PC-9 (cell line): ENCODE measurements at regions of chr15 and their contacts with region 1.

Region 1: GRCh38 chr15:38699633-38700230 is 135.1 kb upstream of the RASGRP1 start:
- DNase-seq: peak in 1 of 2 experiments; percentile 54
- H3K4me3 ChIP-seq: no peak overlapping the region
- H3K27ac ChIP-seq: no peak overlapping the region
- H3K4me1 ChIP-seq: peaks cover 16% of the 10 kb centered on the region
- H3K27me3 ChIP-seq: no peaks in the 10 kb centered on the region
- CTCF ChIP-seq: peak; percentile 85

Region 2: DNA sequence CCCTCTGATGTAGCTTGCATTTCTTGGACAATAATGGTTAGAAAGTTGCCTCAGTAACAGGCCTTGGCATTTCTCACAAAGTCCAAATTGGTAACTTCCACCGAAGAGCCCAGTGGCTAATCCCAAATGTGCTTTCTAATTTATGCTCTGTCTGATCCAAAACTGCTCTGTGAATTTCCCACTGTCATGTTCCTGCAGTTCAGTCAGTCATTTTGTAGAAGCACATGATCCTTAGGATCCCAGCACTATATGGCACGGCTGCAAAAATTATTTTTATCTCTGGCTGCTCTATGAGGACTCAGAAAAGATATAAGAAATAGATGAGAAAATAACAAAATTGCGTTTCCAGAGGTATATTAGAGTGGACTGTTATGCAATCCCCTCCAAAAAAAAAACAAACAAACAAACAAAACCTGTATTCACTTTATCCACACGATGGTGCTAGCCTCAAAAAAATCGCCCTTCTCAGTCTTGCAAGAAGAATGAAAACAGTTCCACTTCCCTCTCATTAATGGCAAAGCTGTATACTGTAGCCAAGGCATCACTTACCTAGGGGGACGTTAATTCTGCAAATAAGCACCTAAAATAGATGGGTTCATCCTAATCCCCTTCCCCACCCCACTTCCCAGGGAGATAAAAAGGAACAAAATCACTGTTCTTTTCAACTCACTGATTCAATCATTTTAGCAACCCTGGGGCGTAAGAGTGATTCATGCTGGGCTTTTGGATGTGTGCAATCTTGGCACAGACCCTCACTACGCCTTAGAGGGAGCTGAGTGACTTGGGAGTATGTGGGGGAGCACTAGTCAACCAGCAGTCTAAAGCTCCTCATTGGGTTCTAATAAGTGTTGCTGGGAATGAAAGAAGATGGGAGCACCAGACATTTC is 704.0 kb before region 1 on chr15:
- CTCF ChIA-PET with region 1: no interaction called
- POLR2A ChIA-PET with region 1: no interaction called
- intact Hi-C with region 1: loop called (anchors 5 kb)
- DNase-seq: peak in 1 of 2 experiments; percentile 28
- H3K4me3 ChIP-seq: no peak overlapping the region
- H3K27ac ChIP-seq: no peak overlapping the region
- H3K4me1 ChIP-seq: no peaks in the 10 kb centered on the region
- H3K27me3 ChIP-seq: no peaks in the 10 kb centered on the region
- CTCF ChIP-seq: peak; percentile 74

Region 3: GRCh38 chr15:38440353-38441129 is 259.2 kb before region 1 on chr15:
- CTCF ChIA-PET with region 1: interaction called, 21 read pairs
- POLR2A ChIA-PET with region 1: no interaction called
- intact Hi-C with region 1: no loop called
- DNase-seq: peak; percentile 61 to 66
- H3K4me3 ChIP-seq: peak overlapping the region; percentile 35; the same call in 1 of the 2 replicates
- H3K27ac ChIP-seq: no peak overlapping the region
- H3K4me1 ChIP-seq: peaks cover 7% of the 10 kb centered on the region; the same call in 1 of the 2 replicates
- H3K27me3 ChIP-seq: no peaks in the 10 kb centered on the region
- CTCF ChIP-seq: peak; percentile 91

Region 4: GRCh38 chr15:38563723-38564519 is 135.8 kb before region 1 on chr15:
- CTCF ChIA-PET with region 1: interaction called, 10 read pairs
- POLR2A ChIA-PET with region 1: no interaction called
- intact Hi-C with region 1: loop called (anchors 5 kb)
- DNase-seq: peak in 1 of 2 experiments; percentile 67
- H3K4me3 ChIP-seq: peak overlapping the region; percentile 62; the same call in 1 of the 2 replicates
- H3K27ac ChIP-seq: no peak overlapping the region
- H3K4me1 ChIP-seq: no peaks in the 10 kb centered on the region
- H3K27me3 ChIP-seq: no peaks in the 10 kb centered on the region
- CTCF ChIP-seq: peak; percentile 89

Region 5: DNA sequence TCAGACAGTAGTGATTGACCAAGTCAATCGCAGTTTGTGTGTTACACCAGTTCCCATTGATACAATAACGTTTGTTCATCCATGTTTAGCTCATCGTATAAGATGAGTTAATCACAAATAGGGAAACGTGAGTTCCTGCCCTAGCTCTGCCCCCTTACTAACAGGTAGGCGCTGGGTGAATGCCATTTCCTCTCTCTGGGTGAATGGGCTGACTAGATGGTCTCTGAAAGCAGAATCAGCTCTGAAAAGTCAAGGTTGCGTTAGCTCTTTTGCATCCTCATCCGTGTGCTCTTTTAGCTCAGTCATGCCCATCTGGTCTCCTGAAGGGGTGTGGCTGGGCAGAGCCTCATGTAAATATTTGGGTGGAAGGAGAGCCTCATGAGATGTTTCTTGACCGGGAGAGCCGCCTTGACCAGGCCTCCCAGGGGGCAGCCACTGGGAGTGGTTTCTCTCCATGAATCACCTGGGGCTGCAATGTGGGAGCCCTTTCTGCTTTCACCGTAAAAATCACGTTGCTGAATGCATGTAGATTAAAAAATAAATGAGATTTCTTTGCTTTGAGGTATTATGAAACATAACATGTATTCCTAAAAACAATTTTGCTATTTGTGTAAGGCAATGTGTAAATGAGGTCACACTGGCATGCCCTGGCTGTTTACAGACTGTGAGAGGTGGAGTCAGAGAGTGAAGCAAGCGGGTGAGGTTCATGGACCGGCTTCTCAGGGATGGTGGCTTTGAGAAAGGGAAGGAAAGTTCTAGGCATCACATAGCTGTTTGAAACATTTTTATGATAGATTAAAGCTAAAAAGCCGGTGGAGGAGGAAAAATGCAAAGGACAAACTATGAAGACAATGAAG is 26.7 kb before region 1 on chr15:
- CTCF ChIA-PET with region 1: interaction called, 12 read pairs
- POLR2A ChIA-PET with region 1: no interaction called
- intact Hi-C with region 1: no loop called
- DNase-seq: peak in 1 of 2 experiments; percentile 5
- H3K4me3 ChIP-seq: no peak overlapping the region
- H3K27ac ChIP-seq: no peak overlapping the region
- H3K4me1 ChIP-seq: no peaks in the 10 kb centered on the region
- H3K27me3 ChIP-seq: no peaks in the 10 kb centered on the region
- CTCF ChIP-seq: no peak

Region 6: GRCh38 chr15:39782441-39783138 is 1082.9 kb after region 1 on chr15 and contains the start of gene FSIP1:
- CTCF ChIA-PET with region 1: no interaction called
- POLR2A ChIA-PET with region 1: no interaction called
- intact Hi-C with region 1: loop called (anchors 10 kb)
- DNase-seq: peak; percentile 84 to 97
- H3K4me3 ChIP-seq: peak within 1 kb of the TSS; percentile 98
- H3K27ac ChIP-seq: peak within 1 kb of the TSS; percentile 31; the same call in 1 of the 2 replicates
- H3K4me1 ChIP-seq: peaks cover 9% of the 10 kb centered on the region
- H3K27me3 ChIP-seq: no peaks in the 10 kb centered on the region
- CTCF ChIP-seq: no peak
- total RNA-seq, gene FSIP1: 0.63 and 1.2 TPM in 2 replicates

Region 7: GRCh38 chr15:39934397-39935071 is 1234.8 kb after region 1 on chr15:
- CTCF ChIA-PET with region 1: no interaction called
- POLR2A ChIA-PET with region 1: no interaction called
- intact Hi-C with region 1: loop called (anchors 10 kb)
- DNase-seq: peak in 1 of 2 experiments; percentile 8
- H3K4me3 ChIP-seq: peak overlapping the region; percentile 93
- H3K27ac ChIP-seq: peak overlapping the region; percentile 88
- H3K4me1 ChIP-seq: peaks cover 23% of the 10 kb centered on the region
- H3K27me3 ChIP-seq: no peaks in the 10 kb centered on the region
- CTCF ChIP-seq: no peak